Heart right ventricle (tissue), 16 donors: ENCODE measurements at regions of chr13 and their contacts with region 1.

Region 1: GRCh38 chr13:80363890-80364503 is 23.1 kb upstream of the SPRY2 start:
- DNase-seq: no peak
- ATAC-seq: peak in 1 of 8 donors; percentile 36
- H3K4me3 ChIP-seq: peak overlapping the region in 6 of 10 donors; percentile 9 to 35 (median 28)
- H3K27ac ChIP-seq: peak overlapping the region in 4 of 10 donors; percentile 7 to 50 (median 39)
- H3K4me1 ChIP-seq: peaks cover 0 to 28% (median 19%) of the 10 kb centered on the region in 9 donors
- H3K27me3 ChIP-seq: no peaks in the 10 kb centered on the region
- CTCF ChIP-seq: peak; percentile 53 to 93 (median 83)

Region 2: DNA sequence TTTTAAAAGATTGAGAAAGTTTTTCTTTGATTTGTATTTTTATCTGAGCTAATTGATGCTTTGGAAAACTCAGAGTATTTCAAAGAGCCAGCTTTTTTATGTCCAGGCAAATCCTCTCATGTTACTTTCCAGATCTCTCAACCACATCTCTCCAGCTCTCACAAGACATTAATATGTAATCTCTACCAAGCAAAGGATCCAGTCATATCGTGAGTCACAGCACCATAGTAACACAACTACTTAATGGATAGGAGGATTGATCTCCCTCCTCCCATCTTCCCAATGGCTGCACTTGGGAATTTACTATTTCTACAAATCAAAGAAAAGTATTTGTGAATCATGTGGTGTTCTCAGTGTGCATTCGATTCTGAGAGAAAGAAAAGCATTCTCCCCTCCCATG is 1823.9 kb before region 1 on chr13:
- intact Hi-C with region 1: no loop called
- DNase-seq: no peak
- ATAC-seq: no peak
- H3K4me3 ChIP-seq: no peak overlapping the region
- H3K27ac ChIP-seq: no peak overlapping the region
- H3K4me1 ChIP-seq: no peaks in the 10 kb centered on the region
- H3K27me3 ChIP-seq: peaks cover 0 to 8% (median 0%) of the 10 kb centered on the region in 7 donors
- CTCF ChIP-seq: no peak

Region 3: DNA sequence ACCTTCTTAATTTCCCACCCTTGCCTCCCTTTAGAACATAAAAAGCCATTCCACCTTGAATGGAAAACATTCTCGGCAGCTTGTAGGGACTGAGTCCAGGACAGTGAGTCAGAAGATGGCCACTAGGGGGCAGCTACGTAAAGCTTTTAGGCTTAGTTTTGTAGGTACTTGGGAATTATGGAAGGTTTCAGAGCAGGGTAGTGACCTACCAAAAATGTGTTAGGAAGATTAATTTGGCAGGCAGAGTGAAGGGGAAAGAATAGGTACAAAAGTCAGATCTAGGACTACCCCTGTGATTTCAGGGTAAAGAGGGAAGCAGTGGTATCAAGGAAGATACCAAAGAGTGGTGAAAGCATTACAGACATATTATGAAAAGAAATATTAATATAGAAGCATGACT is 684.7 kb before region 1 on chr13:
- intact Hi-C with region 1: loop called in 3 of 10 experiments (anchors 2 to 5 kb)
- DNase-seq: peak; percentile 44 to 77
- ATAC-seq: peak; percentile 53 to 76 (median 63)
- H3K4me3 ChIP-seq: no peak overlapping the region
- H3K27ac ChIP-seq: no peak overlapping the region
- H3K4me1 ChIP-seq: peaks cover 0 to 17% (median 0%) of the 10 kb centered on the region in 9 donors
- H3K27me3 ChIP-seq: no peaks in the 10 kb centered on the region
- CTCF ChIP-seq: peak; percentile 56 to 85 (median 78)

Region 4: GRCh38 chr13:80436571-80437169 is 72.7 kb after region 1 on chr13:
- intact Hi-C with region 1: loop called in 1 of 10 experiments (anchors 2 kb)
- DNase-seq: peak in 1 of 2 donors; percentile 39
- ATAC-seq: peak; percentile 55 to 93 (median 90)
- H3K4me3 ChIP-seq: no peak overlapping the region
- H3K27ac ChIP-seq: peak overlapping the region; percentile 3 to 84 (median 66)
- H3K4me1 ChIP-seq: peaks cover 0 to 36% (median 8%) of the 10 kb centered on the region in 9 donors
- H3K27me3 ChIP-seq: no peaks in the 10 kb centered on the region
- CTCF ChIP-seq: no peak

Region 5: GRCh38 chr13:80469853-80470381 is 105.9 kb after region 1 on chr13:
- intact Hi-C with region 1: loop called in 1 of 10 experiments (anchors 10 kb)
- DNase-seq: peak; percentile 50 to 73
- ATAC-seq: peak; percentile 94 to 99 (median 98)
- H3K4me3 ChIP-seq: peak overlapping the region in 1 of 10 donors; percentile 10
- H3K27ac ChIP-seq: peak overlapping the region; percentile 67 to 90 (median 83)
- H3K4me1 ChIP-seq: peaks cover 0 to 40% (median 32%) of the 10 kb centered on the region in 9 donors
- H3K27me3 ChIP-seq: no peaks in the 10 kb centered on the region
- CTCF ChIP-seq: no peak